GM13977 (cell line): ENCODE measurements at regions of chr5 and their contacts with region 1.

Region 1: GRCh38 chr5:81506900-81507588 is 113.1 kb upstream of the ACOT12 start:
- DNase-seq: peak; percentile 78
- CTCF ChIP-seq: peak; percentile 78

Region 2: GRCh38 chr5:81749561-81750307 is 242.7 kb after region 1 on chr5:
- in situ Hi-C with region 1: loop called (anchors 25 kb)
- DNase-seq: peak; percentile 88
- CTCF ChIP-seq: peak; percentile 5

Region 3: GRCh38 chr5:81779125-81779915 is 272.3 kb after region 1 on chr5:
- in situ Hi-C with region 1: no loop called
- DNase-seq: peak; percentile 26
- CTCF ChIP-seq: no peak

Region 4: GRCh38 chr5:81838307-81838906 is 331.4 kb after region 1 on chr5:
- in situ Hi-C with region 1: loop called (anchors 25 kb)
- DNase-seq: no peak
- CTCF ChIP-seq: peak; percentile 50

Region 5: GRCh38 chr5:82165740-82166530 is 658.9 kb after region 1 on chr5:
- in situ Hi-C with region 1: loop called (anchors 25 kb)
- DNase-seq: peak; percentile 43
- CTCF ChIP-seq: peak; percentile 71